ENCODE measurements at regions of chr2 and their contacts with region 1.

Region 1: DNA sequence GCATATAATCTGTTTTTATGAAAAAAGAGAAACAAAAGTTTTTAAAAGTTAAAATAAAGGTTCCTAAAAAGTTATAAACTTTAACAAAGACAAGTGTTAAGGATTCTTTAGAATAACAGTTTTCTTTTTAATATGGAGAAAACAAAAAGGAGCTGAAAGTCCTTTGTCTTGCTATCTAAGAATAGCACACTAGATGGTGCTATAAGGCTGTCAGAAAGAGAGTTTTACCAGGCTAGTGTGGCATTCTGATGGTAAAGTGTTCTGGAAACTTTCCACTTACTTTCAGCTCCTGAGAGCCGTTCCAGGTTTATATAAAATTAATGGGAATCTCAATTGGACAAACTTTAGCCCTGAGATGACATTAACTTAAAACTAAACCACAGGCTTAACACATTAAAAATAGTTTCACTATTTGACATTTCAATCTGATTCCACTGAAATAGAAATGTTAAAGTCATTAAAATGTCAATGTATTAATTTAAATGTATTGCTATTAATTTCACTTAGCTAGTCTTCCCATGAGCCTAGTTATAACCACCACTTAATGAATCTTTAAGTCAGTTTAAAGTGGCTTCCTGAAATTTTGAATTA is 3.7 kb downstream of the FBXO48 start:
- DNase-seq: no peak
- ATAC-seq: no peak
- H3K4me3 ChIP-seq: no peak overlapping the region
- H3K27ac ChIP-seq: no peak overlapping the region
- H3K4me1 ChIP-seq: peaks cover 7% of the 10 kb centered on the region; the same call in 1 of the 2 replicates
- H3K27me3 ChIP-seq: no peaks in the 10 kb centered on the region
- CTCF ChIP-seq: peak; percentile 72; the same call in 1 of the 2 replicates

Region 2: DNA sequence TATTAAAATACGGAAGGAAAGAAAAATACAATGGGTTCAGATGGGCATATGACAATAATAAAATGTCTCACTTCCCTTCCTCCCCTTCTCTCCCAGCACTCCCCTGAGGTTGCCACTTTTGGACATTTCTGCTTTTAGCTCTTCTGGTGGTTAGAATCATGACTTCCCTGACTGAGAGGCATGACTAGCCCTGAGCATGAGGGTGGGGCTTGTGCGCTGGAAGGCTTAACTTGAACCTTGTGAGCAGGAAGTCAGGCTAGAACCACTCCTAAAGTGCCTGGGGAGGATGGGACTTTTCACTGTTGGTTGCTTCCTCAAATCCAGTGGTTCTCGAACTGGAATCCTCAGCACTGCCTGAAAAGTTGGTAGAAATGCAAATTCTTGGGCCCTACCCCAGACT is 251.5 kb after region 1 on chr2:
- CTCF ChIA-PET with region 1: interaction called, 3 read pairs
- POLR2A ChIA-PET with region 1: no interaction called
- in situ Hi-C with region 1: no loop called
- intact Hi-C with region 1: loop called (anchors 5 kb)
- DNase-seq: no peak
- ATAC-seq: no peak
- H3K4me3 ChIP-seq: no peak overlapping the region
- H3K27ac ChIP-seq: no peak overlapping the region
- H3K4me1 ChIP-seq: no peaks in the 10 kb centered on the region
- H3K27me3 ChIP-seq: 0 out of 2 replicates have a peak, but pooled peaks cover 2% of the 10 kb centered on the region
- CTCF ChIP-seq: no peak

Region 3: GRCh38 chr2:68901199-68901960 is 438.0 kb after region 1 on chr2:
- CTCF ChIA-PET with region 1: no interaction called
- POLR2A ChIA-PET with region 1: no interaction called
- in situ Hi-C with region 1: no loop called
- intact Hi-C with region 1: loop called (anchors 5 kb)
- DNase-seq: no peak
- ATAC-seq: no peak
- H3K4me3 ChIP-seq: no peak overlapping the region
- H3K27ac ChIP-seq: no peak overlapping the region
- H3K4me1 ChIP-seq: no peaks in the 10 kb centered on the region
- H3K27me3 ChIP-seq: no peaks in the 10 kb centered on the region
- CTCF ChIP-seq: peak; percentile 44

Measured in Panc1 (cell line).